T-cell (primary cell): ENCODE measurements at regions of chr7 and their contacts with region 1.

Region 1: DNA sequence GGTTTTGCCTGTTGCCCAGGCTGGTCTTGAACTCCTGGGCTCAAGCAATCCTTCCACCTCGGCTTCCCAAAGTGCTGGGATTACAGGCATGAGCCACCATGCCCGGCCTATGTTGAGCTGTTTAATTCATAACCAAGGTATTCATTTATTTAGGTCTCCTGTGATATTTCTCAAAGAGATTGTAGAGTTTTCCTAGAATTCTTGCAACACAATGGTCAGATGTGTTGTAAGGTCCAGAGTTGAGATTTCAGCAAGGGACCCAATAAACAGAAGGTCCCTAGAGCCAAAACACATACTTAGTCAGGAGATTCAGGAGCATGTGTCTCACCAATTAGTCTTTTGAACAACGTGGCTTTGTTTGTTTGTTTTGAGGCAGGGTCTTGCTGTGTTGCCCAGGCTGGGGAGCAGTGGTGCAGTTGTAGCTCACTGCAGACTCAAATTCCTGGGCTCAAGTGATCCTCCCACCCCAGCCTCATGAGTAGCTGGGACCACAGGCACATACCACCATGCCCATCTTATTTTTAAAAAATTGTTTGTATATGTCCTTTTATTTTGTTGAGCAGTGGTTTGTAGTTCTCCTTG is 321.3 kb upstream of the GALNT17 start:
- DNase-seq: no peak
- ATAC-seq: no peak
- H3K4me3 ChIP-seq: no peak overlapping the region
- H3K4me3 Mint-ChIP-seq: no peak overlapping the region
- H3K27ac ChIP-seq: no peak overlapping the region
- H3K27ac Mint-ChIP-seq: no peak overlapping the region
- H3K4me1 ChIP-seq: peaks cover 0 to 3% of the 10 kb centered on the region in 2 experiments
- H3K4me1 Mint-ChIP-seq: peaks cover 3 to 12% (median 9%) of the 10 kb centered on the region in 3 donors
- H3K27me3 ChIP-seq: no peaks in the 10 kb centered on the region
- H3K27me3 Mint-ChIP-seq: peaks cover 0 to 8% of the 10 kb centered on the region in 2 donors

Region 2: GRCh38 chr7:69285854-69286253 is 1524.8 kb before region 1 on chr7:
- CTCF ChIA-PET with region 1: no interaction called
- POLR2A ChIA-PET with region 1: no interaction called
- DNase-seq: no peak
- ATAC-seq: no peak
- H3K4me3 ChIP-seq: no peak overlapping the region
- H3K4me3 Mint-ChIP-seq: no peak overlapping the region
- H3K27ac ChIP-seq: no peak overlapping the region
- H3K27ac Mint-ChIP-seq: no peak overlapping the region
- H3K4me1 ChIP-seq: no peaks in the 10 kb centered on the region
- H3K4me1 Mint-ChIP-seq: no peaks in the 10 kb centered on the region
- H3K27me3 ChIP-seq: peaks cover 0 to 5% of the 10 kb centered on the region in 2 experiments
- H3K27me3 Mint-ChIP-seq: peaks cover 0 to 6% of the 10 kb centered on the region in 2 donors

Region 3: DNA sequence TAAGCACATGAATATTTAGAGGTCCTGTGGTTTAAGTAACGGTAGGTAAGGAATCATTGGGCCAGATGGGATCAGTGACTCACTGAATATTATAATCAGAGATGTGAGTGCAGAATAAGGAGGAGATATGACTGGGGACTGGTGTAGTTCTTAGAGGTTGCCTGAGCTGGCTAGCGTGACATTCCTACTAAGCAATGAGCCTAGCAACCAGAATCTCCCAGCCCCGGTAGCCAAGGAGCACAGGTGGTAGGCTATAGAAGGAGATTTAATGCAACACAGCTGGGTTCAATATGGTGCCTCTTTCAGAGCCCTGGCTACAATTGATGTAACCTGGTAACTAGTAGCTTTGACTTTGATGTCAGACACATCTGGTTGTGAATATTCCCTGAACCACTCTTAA is 570.7 kb before region 1 on chr7:
- CTCF ChIA-PET with region 1: interaction called in 1 of 2 experiments, 17 read pairs
- POLR2A ChIA-PET with region 1: no interaction called
- DNase-seq: no peak
- ATAC-seq: no peak
- H3K4me3 ChIP-seq: no peak overlapping the region
- H3K4me3 Mint-ChIP-seq: no peak overlapping the region
- H3K27ac ChIP-seq: no peak overlapping the region
- H3K27ac Mint-ChIP-seq: no peak overlapping the region
- H3K4me1 ChIP-seq: no peaks in the 10 kb centered on the region
- H3K4me1 Mint-ChIP-seq: peaks cover 0 to 2% (median 0%) of the 10 kb centered on the region in 3 donors
- H3K27me3 ChIP-seq: no peaks in the 10 kb centered on the region
- H3K27me3 Mint-ChIP-seq: no peaks in the 10 kb centered on the region